Calu3 (cell line): ENCODE measurements at regions of chr6 and their contacts with region 1.

Region 1: DNA sequence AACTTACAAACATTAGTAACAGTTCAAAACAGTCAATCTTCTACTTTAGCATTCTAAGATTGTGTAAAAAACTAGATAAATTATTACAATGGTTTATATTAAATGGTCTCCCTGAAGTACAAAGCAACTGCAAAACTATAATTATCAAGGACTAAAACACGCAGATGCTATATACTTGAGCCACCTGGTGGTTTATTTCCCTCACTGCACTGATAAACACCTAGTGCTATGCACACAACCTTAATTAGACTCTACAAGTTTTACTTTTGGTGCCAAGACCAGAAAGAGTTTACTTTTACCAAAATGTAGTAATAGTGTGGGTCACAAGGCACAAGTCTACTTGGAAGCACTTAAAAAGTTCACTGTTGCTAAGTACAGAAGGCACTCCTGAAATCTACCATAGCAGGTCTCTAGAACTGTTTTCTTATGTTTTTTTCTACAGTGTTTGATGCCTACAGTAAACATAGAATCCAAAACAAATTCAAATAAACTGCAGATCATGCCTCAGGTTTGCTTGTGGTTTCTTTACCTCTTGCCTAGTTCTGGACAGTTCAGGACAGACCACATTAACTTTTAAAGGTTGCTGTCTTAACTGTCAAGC is 49.2 kb downstream of the GMDS start:
- DNase-seq: peak; percentile 30
- H3K4me3 Mint-ChIP-seq: no peak overlapping the region
- H3K27ac Mint-ChIP-seq: no peak overlapping the region
- H3K4me1 Mint-ChIP-seq: no peaks in the 10 kb centered on the region
- H3K27me3 Mint-ChIP-seq: no peaks in the 10 kb centered on the region
- CTCF ChIP-seq: peak; percentile 34

Region 2: DNA sequence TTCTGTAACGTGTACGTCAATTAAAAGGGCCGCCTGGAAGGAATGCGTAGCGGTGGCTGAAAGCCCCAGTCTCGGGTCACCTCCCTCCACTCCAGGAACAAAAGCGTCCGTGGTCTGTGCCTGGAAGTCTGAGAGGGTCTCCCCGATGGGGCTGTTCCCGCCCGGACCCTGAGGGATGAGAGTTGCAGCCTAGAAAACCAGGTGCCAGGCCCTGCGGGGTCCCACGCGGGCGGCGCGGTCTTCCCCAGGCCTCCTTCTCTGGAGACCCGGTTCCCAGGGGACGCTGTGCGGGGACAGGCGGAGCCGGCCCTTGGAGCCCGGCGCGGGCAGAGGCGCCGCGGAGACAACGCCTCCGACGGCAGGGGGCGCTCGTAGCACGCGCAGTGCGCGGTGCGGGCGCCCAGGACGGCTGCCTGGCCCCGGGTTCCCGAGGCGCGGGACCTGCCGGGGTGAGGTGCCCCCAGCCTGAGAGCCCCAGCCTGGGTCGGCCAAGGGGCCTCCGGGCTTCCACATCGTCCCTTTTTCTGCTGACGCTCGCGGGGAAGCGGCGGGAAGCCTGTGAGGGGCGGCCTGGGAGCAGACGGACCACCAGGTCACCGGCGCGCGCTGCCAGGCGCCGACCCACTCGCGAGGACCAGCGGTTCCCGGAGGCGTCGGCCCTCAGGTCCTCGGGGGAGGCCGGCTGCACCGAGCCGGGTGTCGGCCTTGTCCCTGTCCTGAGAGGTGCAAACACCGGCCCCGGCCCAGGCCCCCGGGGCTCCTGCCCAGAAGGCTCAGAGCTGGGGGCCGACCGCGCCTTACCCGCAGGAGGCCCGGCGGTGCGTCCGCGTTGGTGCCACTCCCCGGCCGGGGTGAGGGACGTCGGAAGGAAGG is 591.8 kb before region 1 on chr6:
- CTCF ChIA-PET with region 1: no interaction called
- intact Hi-C with region 1: loop called (anchors 2 kb)
- DNase-seq: peak; percentile 84
- H3K4me3 Mint-ChIP-seq: peak overlapping the region; percentile 37
- H3K27ac Mint-ChIP-seq: no peak overlapping the region
- H3K4me1 Mint-ChIP-seq: peaks cover 8% of the 10 kb centered on the region
- H3K27me3 Mint-ChIP-seq: peaks cover 12% of the 10 kb centered on the region
- CTCF ChIP-seq: peak; percentile 87

Region 3: GRCh38 chr6:2327591-2327990 is 131.4 kb after region 1 on chr6:
- CTCF ChIA-PET with region 1: no interaction called
- intact Hi-C with region 1: no loop called
- DNase-seq: no peak
- H3K4me3 Mint-ChIP-seq: no peak overlapping the region
- H3K27ac Mint-ChIP-seq: no peak overlapping the region
- H3K4me1 Mint-ChIP-seq: no peaks in the 10 kb centered on the region
- H3K27me3 Mint-ChIP-seq: no peaks in the 10 kb centered on the region
- CTCF ChIP-seq: no peak

Region 4: DNA sequence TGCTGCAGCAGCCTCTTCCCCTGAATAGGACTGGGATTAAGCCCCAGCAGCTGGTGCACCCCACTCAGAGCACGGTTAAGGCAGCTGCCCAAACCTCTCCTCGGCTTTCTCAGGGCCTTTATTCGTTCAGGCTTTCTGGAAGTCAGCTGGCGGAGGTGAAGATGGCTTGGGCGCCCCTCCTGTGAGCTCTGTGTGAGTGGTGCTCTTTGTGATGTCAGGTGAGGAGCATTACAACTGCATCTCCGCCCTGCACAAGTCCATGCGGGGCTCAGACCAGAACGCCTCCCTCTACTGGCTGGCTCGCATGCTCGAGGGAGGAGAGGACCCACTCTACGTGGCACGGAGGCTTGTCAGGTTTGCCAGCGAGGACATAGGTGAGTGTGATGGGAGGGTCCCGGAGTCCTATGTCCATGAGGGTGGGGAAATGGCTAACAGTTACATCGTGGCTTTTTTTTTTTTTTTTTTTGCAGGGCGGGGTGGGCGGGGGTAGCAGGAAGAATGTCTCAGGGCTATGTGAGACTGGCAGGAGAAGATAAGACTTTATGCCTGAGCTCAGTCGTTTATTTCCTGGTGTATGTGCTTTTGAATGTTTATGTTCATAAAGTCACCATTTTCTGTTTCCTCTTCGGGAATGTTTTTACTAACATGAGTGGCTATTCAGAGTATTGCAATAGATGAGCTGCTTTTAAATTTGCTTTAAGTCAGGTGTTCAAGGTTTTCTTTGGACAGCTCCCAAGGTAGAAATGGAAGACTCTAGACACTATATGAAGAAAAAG is 587.2 kb after region 1 on chr6:
- CTCF ChIA-PET with region 1: no interaction called
- intact Hi-C with region 1: no loop called
- DNase-seq: no peak
- H3K4me3 Mint-ChIP-seq: no peak overlapping the region
- H3K27ac Mint-ChIP-seq: no peak overlapping the region
- H3K4me1 Mint-ChIP-seq: no peaks in the 10 kb centered on the region
- H3K27me3 Mint-ChIP-seq: no peaks in the 10 kb centered on the region
- CTCF ChIP-seq: no peak